Psoas muscle (tissue), 8 donors: ENCODE measurements at regions of chr12 and their contacts with region 1.

Region 1: GRCh38 chr12:83615152-83615551 is 928.4 kb downstream of the TMTC2 start:
- DNase-seq: no peak
- ATAC-seq: no peak
- H3K4me3 ChIP-seq: no peak overlapping the region
- H3K27ac ChIP-seq: no peak overlapping the region
- H3K4me1 ChIP-seq: no peaks in the 10 kb centered on the region
- H3K27me3 ChIP-seq: no peaks in the 10 kb centered on the region
- CTCF ChIP-seq: no peak

Region 2: GRCh38 chr12:83527810-83528209 is 87.3 kb before region 1 on chr12:
- intact Hi-C with region 1: no loop called
- DNase-seq: no peak
- ATAC-seq: no peak
- H3K4me3 ChIP-seq: no peak overlapping the region
- H3K27ac ChIP-seq: no peak overlapping the region
- H3K4me1 ChIP-seq: no peaks in the 10 kb centered on the region
- H3K27me3 ChIP-seq: no peaks in the 10 kb centered on the region
- CTCF ChIP-seq: no peak

Region 3: GRCh38 chr12:83709899-83710298 is 94.7 kb after region 1 on chr12:
- intact Hi-C with region 1: no loop called
- DNase-seq: no peak
- ATAC-seq: no peak
- H3K4me3 ChIP-seq: no peak overlapping the region
- H3K27ac ChIP-seq: no peak overlapping the region
- H3K4me1 ChIP-seq: no peaks in the 10 kb centered on the region
- H3K27me3 ChIP-seq: no peaks in the 10 kb centered on the region
- CTCF ChIP-seq: no peak

Region 4: GRCh38 chr12:83865431-83865830 is 250.3 kb after region 1 on chr12:
- intact Hi-C with region 1: no loop called
- DNase-seq: no peak
- ATAC-seq: no peak
- H3K4me3 ChIP-seq: no peak overlapping the region
- H3K27ac ChIP-seq: no peak overlapping the region
- H3K4me1 ChIP-seq: no peaks in the 10 kb centered on the region
- H3K27me3 ChIP-seq: no peaks in the 10 kb centered on the region
- CTCF ChIP-seq: no peak

Region 5: GRCh38 chr12:84079626-84080025 is 464.5 kb after region 1 on chr12:
- intact Hi-C with region 1: loop called in 1 of 2 experiments (anchors 5 kb)
- DNase-seq: no peak
- ATAC-seq: no peak
- H3K4me3 ChIP-seq: no peak overlapping the region
- H3K27ac ChIP-seq: no peak overlapping the region
- H3K4me1 ChIP-seq: no peaks in the 10 kb centered on the region
- H3K27me3 ChIP-seq: no peaks in the 10 kb centered on the region
- CTCF ChIP-seq: no peak